ENCODE measurements at regions of chr11 and their contacts with region 1.

Region 1: DNA sequence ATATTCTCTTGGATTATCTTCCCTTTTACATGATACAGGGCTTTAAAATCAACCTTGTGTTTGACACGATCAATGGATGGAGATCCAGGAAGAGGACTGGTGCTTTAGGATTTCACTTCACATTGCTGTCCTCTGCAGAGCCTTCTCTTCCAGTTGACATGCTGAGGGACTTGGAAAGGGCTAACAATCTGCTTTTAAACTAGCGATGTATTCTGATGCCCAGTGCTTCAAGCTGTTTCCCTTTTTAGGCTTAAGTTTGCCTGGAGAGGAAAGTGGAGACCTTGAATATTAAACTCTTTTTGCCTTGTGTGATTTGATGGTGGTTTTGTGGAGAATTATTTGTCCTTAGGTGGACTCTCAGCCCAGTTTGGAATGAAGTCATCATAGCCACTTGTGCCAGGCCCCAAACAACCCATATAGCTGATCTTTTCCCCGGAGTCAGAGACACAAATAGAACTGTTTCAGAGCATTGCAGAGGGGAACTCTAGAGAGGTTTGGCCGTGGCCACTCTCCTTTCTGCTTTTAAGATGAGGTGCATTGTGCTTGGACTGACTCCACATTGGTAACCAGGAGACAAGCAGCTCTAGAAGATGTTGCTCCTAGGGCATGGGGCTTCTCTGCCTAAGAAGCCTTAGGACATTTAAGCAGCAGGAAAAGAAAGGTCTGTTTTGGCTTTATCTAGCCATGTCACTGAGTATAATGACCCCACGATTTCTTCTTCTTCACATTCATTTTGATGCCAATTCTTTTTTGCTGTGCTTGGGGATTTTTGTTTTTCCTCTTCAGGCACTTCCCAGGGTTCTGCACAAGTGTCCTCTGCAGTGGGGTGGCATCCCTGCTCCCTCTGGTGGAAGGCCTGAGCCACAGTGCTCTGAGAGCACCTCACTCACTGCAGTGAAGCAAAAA is 152.8 kb downstream of the NCAM1 start:
- DNase-seq: peak; percentile 17 to 48
- ATAC-seq: peak; percentile 76 to 86
- H3K4me3 ChIP-seq: no peak overlapping the region
- H3K27ac ChIP-seq: peak overlapping the region in 1 of 4 donors; percentile 44
- H3K4me1 ChIP-seq: peaks cover 4 to 33% of the 10 kb centered on the region in 2 donors
- H3K27me3 ChIP-seq: no peaks in the 10 kb centered on the region
- CTCF ChIP-seq: peak; percentile 57 to 76 (median 63)
- POLR2A ChIP-seq: no peak

Region 2: DNA sequence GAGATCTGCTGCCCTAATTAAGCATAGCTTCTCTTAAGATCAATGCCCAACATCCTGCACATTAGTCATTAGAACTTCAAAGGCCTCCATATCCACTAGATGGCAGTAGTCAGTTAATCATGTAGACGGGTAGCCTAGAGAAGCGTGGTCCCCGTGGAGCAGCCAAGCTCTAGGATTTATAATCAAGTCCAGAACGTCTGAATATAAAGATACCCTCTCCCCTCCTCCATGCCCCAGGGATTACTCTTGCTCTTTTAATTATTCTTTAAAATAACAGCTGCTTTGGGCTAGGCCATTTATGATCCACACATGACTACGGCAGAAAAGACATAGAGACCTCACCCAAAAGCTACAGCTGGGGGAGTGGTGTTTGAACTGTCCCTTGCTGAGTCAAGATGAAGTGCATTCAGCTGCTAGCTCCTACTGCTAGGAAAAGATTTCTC is 525.8 kb before region 1 on chr11:
- in situ Hi-C with region 1: loop called (anchors 5 to 25 kb)
- intact Hi-C with region 1: loop called (anchors 1 kb)
- DNase-seq: peak; percentile 40 to 60
- ATAC-seq: peak; percentile 87 to 89
- H3K4me3 ChIP-seq: no peak overlapping the region
- H3K27ac ChIP-seq: no peak overlapping the region
- H3K4me1 ChIP-seq: peaks cover 0 to 8% of the 10 kb centered on the region in 2 donors
- H3K27me3 ChIP-seq: no peaks in the 10 kb centered on the region
- CTCF ChIP-seq: peak; percentile 70 to 79 (median 74)
- POLR2A ChIP-seq: no peak

Region 3: GRCh38 chr11:112795142-112795815 is 318.8 kb before region 1 on chr11:
- in situ Hi-C with region 1: no loop called
- intact Hi-C with region 1: loop called (anchors 5 kb)
- DNase-seq: peak in 1 of 2 donors; percentile 64
- ATAC-seq: peak; percentile 76 to 79
- H3K4me3 ChIP-seq: no peak overlapping the region
- H3K27ac ChIP-seq: peak overlapping the region in 2 of 4 donors; percentile 44 to 55
- H3K4me1 ChIP-seq: peaks cover 8 to 24% of the 10 kb centered on the region in 2 donors
- H3K27me3 ChIP-seq: no peaks in the 10 kb centered on the region
- CTCF ChIP-seq: peak; percentile 67 to 82 (median 70)
- POLR2A ChIP-seq: no peak

Region 4: DNA sequence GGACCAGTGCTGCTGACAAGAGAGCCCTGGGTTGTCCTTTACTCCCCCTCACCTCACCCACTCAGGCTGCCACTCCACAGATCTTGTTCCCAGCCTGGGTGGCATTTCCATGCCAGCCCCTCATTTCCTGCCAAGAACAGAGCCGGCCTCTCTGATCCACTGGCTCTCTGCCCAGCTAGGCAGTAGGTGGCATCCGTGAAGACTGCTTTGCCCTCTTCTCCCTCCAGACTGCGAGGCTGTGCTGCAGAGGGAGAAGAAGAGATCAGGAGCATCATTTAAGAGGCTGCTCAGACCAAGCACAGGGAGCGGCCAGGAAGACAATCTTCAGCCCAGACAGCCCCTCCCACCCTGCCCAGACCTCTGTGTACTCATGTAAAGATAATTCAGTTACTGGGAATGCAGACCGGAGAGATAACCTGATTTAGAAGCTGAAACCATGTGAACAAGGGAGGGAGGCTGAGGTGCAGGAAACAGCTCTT is 279.7 kb before region 1 on chr11:
- in situ Hi-C with region 1: no loop called
- intact Hi-C with region 1: loop called (anchors 5 kb)
- DNase-seq: peak; percentile 67 to 86
- ATAC-seq: peak; percentile 90 to 96
- H3K4me3 ChIP-seq: no peak overlapping the region
- H3K27ac ChIP-seq: no peak overlapping the region
- H3K4me1 ChIP-seq: peaks cover 6 to 9% of the 10 kb centered on the region in 2 donors
- H3K27me3 ChIP-seq: no peaks in the 10 kb centered on the region
- CTCF ChIP-seq: no peak
- POLR2A ChIP-seq: no peak

Region 5: DNA sequence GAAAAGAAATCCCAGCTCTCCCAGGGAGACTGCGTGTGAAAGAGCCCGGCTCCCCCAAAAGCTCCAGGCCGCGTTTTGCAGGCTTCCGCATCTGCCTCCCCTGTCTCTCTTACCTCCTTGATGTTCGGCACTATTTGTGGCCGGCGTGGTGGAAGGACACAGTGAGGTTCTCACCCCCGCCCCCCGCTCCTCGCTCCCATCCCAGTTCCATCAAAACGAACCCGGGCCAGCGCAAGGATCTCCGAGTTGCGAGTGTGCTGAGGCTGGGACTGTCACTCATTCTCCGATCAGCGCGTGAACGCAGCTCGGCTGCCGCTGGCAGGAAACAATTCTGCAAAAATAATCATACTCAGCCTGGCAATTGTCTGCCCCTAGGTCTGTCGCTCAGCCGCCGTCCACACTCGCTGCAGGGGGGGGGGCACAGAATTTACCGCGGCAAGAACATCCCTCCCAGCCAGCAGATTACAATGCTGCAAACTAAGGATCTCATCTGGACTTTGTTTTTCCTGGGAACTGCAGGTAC is 152.8 kb before region 1 on chr11 and contains the start of gene NCAM1:
- in situ Hi-C with region 1: no loop called
- intact Hi-C with region 1: loop called (anchors 5 kb)
- DNase-seq: peak; percentile 43 to 64
- ATAC-seq: peak; percentile 39 to 47
- H3K4me3 ChIP-seq: peak within 1 kb of the TSS; percentile 52 to 65 (median 55)
- H3K27ac ChIP-seq: peak within 1 kb of the TSS in 3 of 4 donors; percentile 10 to 41 (median 18)
- H3K4me1 ChIP-seq: peaks cover 5 to 21% of the 10 kb centered on the region in 2 donors
- H3K27me3 ChIP-seq: peaks cover 8 to 76% (median 44%) of the 10 kb centered on the region in 3 donors
- CTCF ChIP-seq: no peak
- POLR2A ChIP-seq: no peak
- total RNA-seq, gene NCAM1: 12.8 to 27.7 (median 15.7) TPM

Region 6: DNA sequence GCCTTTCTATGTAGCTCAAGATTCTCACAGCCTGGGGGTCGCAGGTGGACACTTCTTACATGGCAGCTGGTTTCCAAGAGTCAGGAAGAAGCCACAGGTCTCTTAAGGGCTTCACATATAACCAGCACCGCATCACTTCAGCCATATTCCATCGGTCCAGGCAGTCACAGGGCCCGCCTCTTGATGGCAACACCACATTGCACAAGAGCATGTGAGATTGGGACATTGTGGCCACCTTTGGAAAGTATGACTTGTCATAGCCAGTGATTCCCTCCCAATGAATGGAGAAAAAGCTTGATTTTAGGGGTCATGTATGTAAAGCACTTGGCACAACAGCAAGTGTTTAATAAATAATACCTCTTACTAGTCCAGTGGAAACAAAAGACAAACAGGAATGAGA is 54.5 kb before region 1 on chr11:
- in situ Hi-C with region 1: no loop called
- intact Hi-C with region 1: loop called (anchors 5 kb)
- DNase-seq: peak in 1 of 2 donors; percentile 37
- ATAC-seq: peak; percentile 66 to 68
- H3K4me3 ChIP-seq: no peak overlapping the region
- H3K27ac ChIP-seq: no peak overlapping the region
- H3K4me1 ChIP-seq: no peaks in the 10 kb centered on the region
- H3K27me3 ChIP-seq: no peaks in the 10 kb centered on the region
- CTCF ChIP-seq: no peak
- POLR2A ChIP-seq: no peak